ENCODE measurements at regions of chr3 and their contacts with region 1.

Region 1: DNA sequence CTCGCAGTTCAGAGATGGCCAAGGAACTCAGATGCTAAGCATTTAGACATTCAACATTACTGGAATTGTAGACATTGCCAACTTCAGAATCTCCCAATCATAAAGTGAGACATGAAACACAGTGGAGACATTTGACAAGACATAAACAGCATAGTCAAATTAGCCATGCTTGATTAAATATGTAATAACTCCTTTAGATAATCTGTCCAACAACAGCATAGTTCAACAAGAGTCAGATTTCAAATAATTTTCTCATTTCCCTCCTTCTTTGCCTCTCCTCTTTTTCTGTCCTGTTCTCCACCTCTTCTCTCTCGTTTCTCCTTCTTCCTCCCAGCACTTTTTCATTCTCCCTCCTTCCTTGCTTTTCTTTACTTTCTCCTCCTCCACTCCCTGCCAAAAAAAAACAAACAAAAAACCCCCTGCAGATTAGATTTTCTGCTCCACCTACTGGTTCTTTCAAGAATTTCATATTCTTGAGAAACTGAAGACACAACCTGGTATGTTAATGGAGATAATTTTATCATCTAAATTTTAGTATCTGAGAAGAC is 20.2 kb downstream of the CPOX start:
- DNase-seq: no peak
- ATAC-seq: peak; percentile 40
- H3K4me3 Mint-ChIP-seq: peak overlapping the region; percentile 21
- H3K27ac Mint-ChIP-seq: peak overlapping the region; percentile 74
- H3K4me1 Mint-ChIP-seq: peaks cover 6% of the 10 kb centered on the region
- H3K27me3 Mint-ChIP-seq: no peaks in the 10 kb centered on the region
- CTCF ChIP-seq: no peak

Region 2: DNA sequence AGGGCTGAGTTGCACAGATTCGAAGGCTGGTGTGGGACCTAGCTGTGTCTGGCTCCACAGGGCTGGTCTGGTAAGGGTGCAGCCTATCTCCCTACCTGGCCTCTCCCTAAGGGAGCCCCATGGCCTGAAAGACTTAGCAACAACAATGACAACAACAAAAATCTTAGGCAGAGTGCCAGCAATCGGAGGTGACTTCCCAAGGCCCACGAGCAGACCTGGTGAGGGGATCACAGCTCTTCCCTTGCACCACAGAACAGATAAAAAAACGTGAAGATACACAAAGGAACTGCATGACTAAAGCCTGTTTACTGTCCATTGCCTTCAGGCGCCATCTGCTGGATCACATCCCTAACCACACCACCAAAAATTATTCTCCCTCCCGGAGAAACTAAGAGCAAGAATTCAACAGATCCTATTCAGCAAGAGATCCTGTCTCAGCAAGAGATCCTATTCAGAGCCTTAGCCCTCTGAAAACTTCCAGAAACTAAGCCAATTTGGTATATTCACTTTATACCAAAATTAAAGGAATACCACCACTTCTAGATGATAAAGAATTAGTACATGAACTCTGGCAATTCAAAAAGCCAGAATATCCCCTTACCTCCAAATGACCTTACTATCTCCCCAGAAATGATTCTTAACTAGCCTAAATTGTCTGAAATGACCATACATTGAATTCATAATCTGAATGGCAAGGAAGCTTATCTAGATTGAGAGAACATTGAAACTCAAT is 243.7 kb before region 1 on chr3:
- CTCF ChIA-PET with region 1: no interaction called
- POLR2A ChIA-PET with region 1: no interaction called
- intact Hi-C with region 1: loop called (anchors 1 kb)
- DNase-seq: no peak
- ATAC-seq: no peak
- H3K4me3 Mint-ChIP-seq: no peak overlapping the region
- H3K27ac Mint-ChIP-seq: no peak overlapping the region
- H3K4me1 Mint-ChIP-seq: no peaks in the 10 kb centered on the region
- H3K27me3 Mint-ChIP-seq: peaks cover 6% of the 10 kb centered on the region
- CTCF ChIP-seq: no peak

Region 3: GRCh38 chr3:98540346-98540745 is 32.9 kb before region 1 on chr3:
- CTCF ChIA-PET with region 1: interaction called, 4 read pairs
- POLR2A ChIA-PET with region 1: interaction called, 4 read pairs
- intact Hi-C with region 1: loop called (anchors 5 kb)
- DNase-seq: no peak
- ATAC-seq: peak; percentile 67
- H3K4me3 Mint-ChIP-seq: no peak overlapping the region
- H3K27ac Mint-ChIP-seq: peak overlapping the region; percentile 25
- H3K4me1 Mint-ChIP-seq: peaks cover 23% of the 10 kb centered on the region
- H3K27me3 Mint-ChIP-seq: no peaks in the 10 kb centered on the region
- CTCF ChIP-seq: no peak

Region 4: GRCh38 chr3:98556164-98557130 is 16.8 kb before region 1 on chr3:
- CTCF ChIA-PET with region 1: interaction called, 4 read pairs
- POLR2A ChIA-PET with region 1: interaction called, 6 read pairs
- intact Hi-C with region 1: loop called (anchors 2 kb)
- DNase-seq: no peak
- ATAC-seq: peak; percentile 76
- H3K4me3 Mint-ChIP-seq: peak overlapping the region; percentile 42
- H3K27ac Mint-ChIP-seq: peak overlapping the region; percentile 80
- H3K4me1 Mint-ChIP-seq: peaks cover 56% of the 10 kb centered on the region
- H3K27me3 Mint-ChIP-seq: peaks cover 2% of the 10 kb centered on the region
- CTCF ChIP-seq: no peak

Measured in activated B cell treated with CpG ODN at 0.5 μM for 24 hours (primary cell).